Cardiac septum (tissue), 1 donor: ENCODE measurements at regions of chr2 and their contacts with region 1.

Region 1: GRCh38 chr2:230793572-230794359 is 71.0 kb upstream of the ITM2C start:
- DNase-seq: peak; percentile 85

Region 2: GRCh38 chr2:230472621-230473018 is 321.1 kb before region 1 on chr2:
- intact Hi-C with region 1: no loop called
- DNase-seq: no peak

Region 3: GRCh38 chr2:230758566-230759480 is 34.9 kb before region 1 on chr2:
- intact Hi-C with region 1: loop called (anchors 5 kb)
- DNase-seq: no peak

Region 4: DNA sequence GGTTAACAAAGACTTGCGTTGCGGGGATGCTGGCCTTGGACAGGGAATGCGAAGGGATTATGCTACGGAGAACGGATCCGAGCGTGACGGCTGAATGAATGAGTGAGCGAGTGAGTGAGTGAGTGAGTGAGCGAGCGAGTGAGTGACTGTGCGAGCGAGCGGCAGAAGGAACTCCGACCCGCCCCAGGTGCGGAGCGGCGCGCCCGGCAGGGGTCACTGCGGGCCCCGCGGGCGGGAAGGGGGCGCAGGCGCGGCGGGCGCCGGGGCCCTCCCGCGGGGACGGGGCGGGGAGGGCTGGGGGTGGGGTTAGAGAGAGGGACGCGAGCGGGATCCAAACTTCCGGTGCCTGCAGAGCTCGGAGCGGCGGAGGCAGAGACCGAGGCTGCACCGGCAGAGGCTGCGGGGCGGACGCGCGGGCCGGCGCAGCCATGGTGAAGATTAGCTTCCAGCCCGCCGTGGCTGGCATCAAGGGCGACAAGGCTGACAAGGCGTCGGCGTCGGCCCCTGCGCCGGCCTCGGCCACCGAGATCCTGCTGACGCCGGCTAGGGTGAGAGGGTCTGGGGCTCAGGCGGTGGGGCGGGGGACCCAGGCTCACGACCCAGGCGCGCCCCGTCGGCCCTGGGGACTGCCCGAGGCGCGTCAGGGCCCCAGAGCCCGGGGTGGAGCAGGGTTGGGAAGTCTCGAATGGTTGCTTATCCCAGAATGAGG is 71.0 kb after region 1 on chr2 and contains the start of gene ITM2C:
- intact Hi-C with region 1: no loop called
- DNase-seq: no peak
- total RNA-seq, gene ITM2C: 18.4 TPM